ENCODE measurements at regions of chr5 and their contacts with region 1.

Region 1: GRCh38 chr5:75336625-75337339 is at the start of gene HMGCR:
- H3K4me3 ChIP-seq: peak within 1 kb of the TSS; percentile 96
- H3K27ac ChIP-seq: peak within 1 kb of the TSS; percentile 84
- H3K4me1 ChIP-seq: peaks cover 12% of the 10 kb centered on the region
- CTCF ChIP-seq: peak; percentile 93

Region 2: GRCh38 chr5:75236322-75237316 is 100.2 kb before region 1 on chr5 and contains the start of gene ANKRD31:
- CTCF ChIA-PET with region 1: interaction called, 17 read pairs
- POLR2A ChIA-PET with region 1: interaction called, 34 read pairs
- H3K4me3 ChIP-seq: peak within 1 kb of the TSS; percentile 84
- H3K27ac ChIP-seq: peak within 1 kb of the TSS; percentile 40; the same call in 1 of the 2 replicates
- H3K4me1 ChIP-seq: peaks cover 4% of the 10 kb centered on the region
- CTCF ChIP-seq: no peak; the same call in 1 of the 2 replicates

Region 3: DNA sequence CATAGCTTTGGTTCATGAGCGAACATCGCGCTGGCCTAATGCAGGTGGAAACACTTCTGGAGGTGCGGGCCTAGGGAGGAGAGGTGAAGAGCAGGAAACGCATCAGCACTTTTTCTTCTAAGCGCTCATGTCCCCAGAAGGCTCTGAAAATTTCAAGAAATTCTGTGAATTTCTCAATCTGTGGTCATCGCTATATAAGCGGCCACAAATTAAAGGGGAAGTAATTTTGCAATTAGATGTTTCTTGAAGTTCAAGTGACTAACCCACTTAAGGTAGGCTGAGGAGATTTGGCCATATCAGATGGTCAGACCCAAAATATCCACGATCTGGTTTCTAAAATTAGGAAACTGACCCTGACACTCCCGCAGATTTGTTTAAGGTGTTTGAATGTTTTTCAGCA is 16.4 kb before region 1 on chr5:
- CTCF ChIA-PET with region 1: no interaction called
- POLR2A ChIA-PET with region 1: interaction called, 25 read pairs
- H3K4me3 ChIP-seq: no peak overlapping the region
- H3K27ac ChIP-seq: no peak overlapping the region
- H3K4me1 ChIP-seq: peaks cover 3% of the 10 kb centered on the region; the same call in 1 of the 2 replicates
- CTCF ChIP-seq: no peak

Region 4: DNA sequence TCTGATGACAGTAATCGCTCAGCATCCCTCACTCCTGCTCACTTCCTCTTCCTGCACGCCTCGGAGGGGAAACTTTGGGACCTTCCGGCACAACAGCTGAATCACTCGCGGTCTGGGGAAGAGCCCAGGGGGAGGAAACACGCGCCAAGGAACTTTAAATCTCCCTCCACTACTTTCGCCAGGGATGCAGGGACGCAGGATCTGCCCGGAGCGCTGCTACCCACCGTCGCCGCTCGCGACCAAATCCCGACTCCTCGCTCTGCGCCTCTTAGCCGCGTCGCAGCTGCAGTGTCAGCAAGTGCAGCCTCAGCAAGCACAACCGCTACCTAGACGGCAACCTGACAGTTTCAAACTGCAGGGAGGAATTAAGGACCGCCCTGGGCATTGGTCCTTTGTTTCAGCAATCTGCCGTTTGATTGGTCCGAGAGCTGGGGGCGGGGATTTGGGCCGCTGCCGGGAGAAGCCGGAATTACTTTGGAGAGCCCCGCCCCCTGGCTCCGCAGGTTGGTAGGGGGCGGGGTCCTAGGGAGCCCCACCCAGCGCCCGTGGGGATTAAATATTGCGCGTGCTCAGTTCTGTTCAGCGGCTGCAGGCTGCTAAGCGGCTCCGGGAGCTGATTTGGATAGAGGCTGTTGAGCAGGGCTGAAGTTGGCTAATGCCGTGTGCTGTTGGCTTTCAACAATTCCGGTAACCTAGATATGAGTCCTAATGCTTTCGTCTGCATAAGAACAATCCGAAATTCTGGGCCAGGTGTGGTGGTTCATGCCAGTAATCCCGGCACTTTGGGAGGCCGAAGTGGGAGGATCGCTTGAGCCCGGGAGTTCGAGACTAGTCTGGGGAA is 380.5 kb after region 1 on chr5 and contains the start of gene POC5:
- CTCF ChIA-PET with region 1: interaction called, 6 read pairs
- POLR2A ChIA-PET with region 1: interaction called, 10 read pairs
- H3K4me3 ChIP-seq: peak within 1 kb of the TSS; percentile 74
- H3K27ac ChIP-seq: peak within 1 kb of the TSS; percentile 59
- H3K4me1 ChIP-seq: peaks cover 3% of the 10 kb centered on the region; the same call in 1 of the 2 replicates
- CTCF ChIP-seq: no peak